ENCODE measurements at regions of chr2 and their contacts with region 1.

Region 1: GRCh38 chr2:217899231-217900009 is 103.4 kb downstream of the TNS1 start:
- DNase-seq: peak; percentile 77 to 86
- ATAC-seq: peak; percentile 63 to 81
- H3K4me3 ChIP-seq: no peak overlapping the region
- H3K27ac ChIP-seq: peak overlapping the region; percentile 86 to 89
- H3K4me1 ChIP-seq: peaks cover 56% of the 10 kb centered on the region
- CTCF ChIP-seq: peak; percentile 63
- EP300 ChIP-seq: no peak
- POLR2A ChIP-seq: no peak
- RAD21 ChIP-seq: peak; percentile 32 to 43; a peak in 4 of 5 replicates

Region 2: DNA sequence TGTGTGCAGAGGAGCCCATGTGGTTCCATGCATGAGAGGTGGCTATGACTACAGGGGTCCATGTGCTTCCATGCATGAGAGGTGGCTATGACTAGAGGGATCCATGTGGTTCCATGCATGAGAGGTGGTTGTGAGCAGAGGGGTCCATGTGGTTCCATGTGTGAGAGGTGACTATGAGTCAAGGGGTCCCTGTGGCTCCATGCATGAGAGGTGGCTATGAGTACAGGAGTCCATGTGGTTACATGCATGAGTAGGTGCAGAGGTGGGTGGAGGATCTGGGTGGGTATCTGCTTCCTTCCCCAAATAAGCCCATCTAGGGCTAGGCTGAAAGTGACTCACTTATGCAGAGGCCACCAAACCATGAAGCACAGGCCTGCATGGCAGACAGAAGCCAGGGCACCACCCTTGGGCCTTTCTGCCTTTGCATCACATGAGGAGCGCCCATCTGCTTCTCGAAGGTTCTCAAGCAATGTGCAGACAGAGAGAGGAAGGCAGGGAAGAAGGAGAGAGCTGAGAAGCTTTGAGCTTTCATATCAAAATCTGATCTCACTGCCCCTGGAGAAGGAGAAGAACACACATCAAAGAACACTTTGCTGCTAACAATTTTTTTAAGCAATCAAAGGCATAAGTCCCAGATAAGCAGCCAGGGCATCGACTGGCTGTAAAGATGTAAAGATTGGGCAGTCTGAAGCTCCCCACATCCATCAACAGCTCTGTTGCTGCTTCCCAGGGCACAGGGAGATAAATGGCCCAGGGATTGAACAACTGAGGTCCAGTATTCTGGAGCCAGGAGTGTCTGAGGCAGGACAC is 34.3 kb before region 1 on chr2:
- CTCF ChIA-PET with region 1: interaction called, 14 read pairs
- POLR2A ChIA-PET with region 1: no interaction called
- DNase-seq: no peak
- ATAC-seq: no peak
- H3K4me3 ChIP-seq: no peak overlapping the region
- H3K27ac ChIP-seq: no peak overlapping the region
- H3K4me1 ChIP-seq: no peaks in the 10 kb centered on the region
- CTCF ChIP-seq: no peak
- EP300 ChIP-seq: no peak
- POLR2A ChIP-seq: no peak
- RAD21 ChIP-seq: no peak

Region 3: GRCh38 chr2:217918308-217919024 is 19.0 kb after region 1 on chr2:
- CTCF ChIA-PET with region 1: interaction called, 16 read pairs
- POLR2A ChIA-PET with region 1: no interaction called
- DNase-seq: peak in 1 of 2 experiments; percentile 31
- ATAC-seq: peak in 1 of 2 experiments; percentile 56; a peak in 3 of 6 replicates
- H3K4me3 ChIP-seq: no peak overlapping the region
- H3K27ac ChIP-seq: peak overlapping the region; percentile 61 to 85
- H3K4me1 ChIP-seq: peaks cover 77% of the 10 kb centered on the region
- CTCF ChIP-seq: no peak
- EP300 ChIP-seq: no peak
- POLR2A ChIP-seq: no peak
- RAD21 ChIP-seq: no peak

Region 4: GRCh38 chr2:217988014-217988839 is 88.8 kb after region 1 on chr2:
- CTCF ChIA-PET with region 1: interaction called, 32 read pairs
- POLR2A ChIA-PET with region 1: no interaction called
- DNase-seq: peak; percentile 56 to 61
- ATAC-seq: peak; percentile 56 to 86; a peak in 5 of 6 replicates
- H3K4me3 ChIP-seq: no peak overlapping the region
- H3K27ac ChIP-seq: peak overlapping the region; percentile 55 to 71
- H3K4me1 ChIP-seq: peaks cover 24% of the 10 kb centered on the region
- CTCF ChIP-seq: peak; percentile 90
- EP300 ChIP-seq: no peak
- POLR2A ChIP-seq: no peak
- RAD21 ChIP-seq: peak; percentile 91 to 93

Region 5: GRCh38 chr2:218026676-218027425 is 127.4 kb after region 1 on chr2:
- CTCF ChIA-PET with region 1: no interaction called
- POLR2A ChIA-PET with region 1: no interaction called
- DNase-seq: no peak
- ATAC-seq: no peak
- H3K4me3 ChIP-seq: no peak overlapping the region
- H3K27ac ChIP-seq: no peak overlapping the region
- H3K4me1 ChIP-seq: no peaks in the 10 kb centered on the region
- CTCF ChIP-seq: no peak
- EP300 ChIP-seq: no peak
- POLR2A ChIP-seq: no peak
- RAD21 ChIP-seq: no peak